CD8-positive, alpha-beta T cell (primary cell): ENCODE measurements at regions of chr1 and their contacts with region 1.

Region 1: DNA sequence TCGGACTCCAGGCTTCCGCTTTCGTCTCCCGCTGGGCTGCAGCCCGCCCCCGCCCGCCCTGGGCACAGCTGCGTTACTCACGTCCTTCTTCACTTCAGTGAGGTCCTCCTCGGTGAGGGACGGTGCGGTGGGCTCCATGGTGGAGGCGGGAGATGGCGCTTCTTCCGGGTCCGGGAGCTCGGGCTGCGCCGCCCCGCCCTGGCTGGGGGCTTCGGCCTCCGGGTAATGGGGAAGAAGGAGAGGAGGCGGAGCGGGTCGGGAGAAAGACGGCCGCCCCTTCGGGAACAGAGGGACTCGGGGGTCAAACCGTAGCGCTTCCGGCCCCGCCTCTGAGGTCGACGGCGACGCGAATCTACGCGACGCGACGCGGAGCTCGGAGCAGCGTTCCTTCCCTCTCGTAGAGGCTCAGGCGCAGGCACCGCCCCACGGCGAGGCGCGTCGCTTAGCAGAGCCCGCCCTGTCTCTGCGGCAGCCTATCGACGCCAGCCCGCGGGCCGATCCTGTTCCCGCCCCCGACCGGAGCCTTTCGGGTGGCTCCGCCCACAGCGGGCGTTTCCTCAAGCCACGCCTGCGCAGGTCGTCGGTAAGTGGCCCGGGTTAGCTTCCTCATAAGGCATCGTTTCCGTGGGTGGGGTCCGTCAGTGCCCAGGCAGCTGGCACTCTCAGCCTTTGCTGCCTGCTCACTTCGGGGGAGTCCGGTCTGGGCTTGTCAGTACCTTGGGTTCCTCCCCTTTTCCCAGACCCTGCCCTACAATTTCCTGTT is at the start of gene BCL10:
- DNase-seq: peak; percentile 95 to 99 (median 98)
- ATAC-seq: peak; percentile 94
- H3K4me3 ChIP-seq: peak within 1 kb of the TSS; percentile 72 to 80
- H3K4me3 Mint-ChIP-seq: peak within 1 kb of the TSS; percentile 86
- H3K27ac ChIP-seq: peak within 1 kb of the TSS; percentile 92 to 95
- H3K27ac Mint-ChIP-seq: peak within 1 kb of the TSS; percentile 94
- H3K4me1 ChIP-seq: peaks cover 35% of the 10 kb centered on the region
- H3K4me1 Mint-ChIP-seq: peaks cover 48% of the 10 kb centered on the region
- H3K27me3 ChIP-seq: no peaks in the 10 kb centered on the region
- H3K27me3 Mint-ChIP-seq: no peaks in the 10 kb centered on the region
- CTCF ChIP-seq: no peak
- total RNA-seq, gene BCL10: 48.2 to 51.7 TPM

Region 2: GRCh38 chr1:84298328-84298683 is 978.1 kb before region 1 on chr1:
- CTCF ChIA-PET with region 1: no interaction called
- POLR2A ChIA-PET with region 1: no interaction called
- intact Hi-C with region 1: loop called in 1 of 2 experiments (anchors 5 kb)
- DNase-seq: peak; percentile 12 to 75 (median 41)
- ATAC-seq: peak; percentile 70
- H3K4me3 ChIP-seq: peak overlapping the region; percentile 76 to 94
- H3K4me3 Mint-ChIP-seq: peak overlapping the region; percentile 78
- H3K27ac ChIP-seq: peak overlapping the region; percentile 8 to 53
- H3K27ac Mint-ChIP-seq: peak overlapping the region; percentile 46
- H3K4me1 ChIP-seq: peaks cover 17% of the 10 kb centered on the region
- H3K4me1 Mint-ChIP-seq: peaks cover 37% of the 10 kb centered on the region
- H3K27me3 ChIP-seq: no peaks in the 10 kb centered on the region
- H3K27me3 Mint-ChIP-seq: peaks cover 5% of the 10 kb centered on the region
- CTCF ChIP-seq: no peak

Region 3: GRCh38 chr1:84573967-84574842 is 702.2 kb before region 1 on chr1 and contains the start of gene CTBS:
- CTCF ChIA-PET with region 1: no interaction called
- POLR2A ChIA-PET with region 1: interaction called, 3 read pairs
- intact Hi-C with region 1: loop called (anchors 5 to 10 kb)
- DNase-seq: peak; percentile 67 to 93 (median 85)
- ATAC-seq: peak; percentile 91
- H3K4me3 ChIP-seq: peak within 1 kb of the TSS; percentile 81 to 92
- H3K4me3 Mint-ChIP-seq: peak within 1 kb of the TSS; percentile 96
- H3K27ac ChIP-seq: peak within 1 kb of the TSS; percentile 94 to 96
- H3K27ac Mint-ChIP-seq: peak within 1 kb of the TSS; percentile 99
- H3K4me1 ChIP-seq: peaks cover 20% of the 10 kb centered on the region
- H3K4me1 Mint-ChIP-seq: peaks cover 42% of the 10 kb centered on the region
- H3K27me3 ChIP-seq: no peaks in the 10 kb centered on the region
- H3K27me3 Mint-ChIP-seq: no peaks in the 10 kb centered on the region
- CTCF ChIP-seq: no peak
- total RNA-seq, gene CTBS: 17.3 to 19.7 TPM

Region 4: GRCh38 chr1:85061711-85062424 is 214.5 kb before region 1 on chr1:
- CTCF ChIA-PET with region 1: no interaction called
- POLR2A ChIA-PET with region 1: no interaction called
- intact Hi-C with region 1: loop called in 1 of 2 experiments (anchors 1 kb)
- DNase-seq: peak; percentile 64 to 96 (median 81)
- ATAC-seq: peak; percentile 99
- H3K4me3 ChIP-seq: peak overlapping the region; percentile 38 to 49
- H3K4me3 Mint-ChIP-seq: peak overlapping the region; percentile 84
- H3K27ac ChIP-seq: peak overlapping the region in 1 of 2 experiments; percentile 29
- H3K27ac Mint-ChIP-seq: peak overlapping the region; percentile 72
- H3K4me1 ChIP-seq: peaks cover 4% of the 10 kb centered on the region
- H3K4me1 Mint-ChIP-seq: peaks cover 14% of the 10 kb centered on the region
- H3K27me3 ChIP-seq: no peaks in the 10 kb centered on the region
- H3K27me3 Mint-ChIP-seq: peaks cover 12% of the 10 kb centered on the region
- CTCF ChIP-seq: no peak

Region 5: DNA sequence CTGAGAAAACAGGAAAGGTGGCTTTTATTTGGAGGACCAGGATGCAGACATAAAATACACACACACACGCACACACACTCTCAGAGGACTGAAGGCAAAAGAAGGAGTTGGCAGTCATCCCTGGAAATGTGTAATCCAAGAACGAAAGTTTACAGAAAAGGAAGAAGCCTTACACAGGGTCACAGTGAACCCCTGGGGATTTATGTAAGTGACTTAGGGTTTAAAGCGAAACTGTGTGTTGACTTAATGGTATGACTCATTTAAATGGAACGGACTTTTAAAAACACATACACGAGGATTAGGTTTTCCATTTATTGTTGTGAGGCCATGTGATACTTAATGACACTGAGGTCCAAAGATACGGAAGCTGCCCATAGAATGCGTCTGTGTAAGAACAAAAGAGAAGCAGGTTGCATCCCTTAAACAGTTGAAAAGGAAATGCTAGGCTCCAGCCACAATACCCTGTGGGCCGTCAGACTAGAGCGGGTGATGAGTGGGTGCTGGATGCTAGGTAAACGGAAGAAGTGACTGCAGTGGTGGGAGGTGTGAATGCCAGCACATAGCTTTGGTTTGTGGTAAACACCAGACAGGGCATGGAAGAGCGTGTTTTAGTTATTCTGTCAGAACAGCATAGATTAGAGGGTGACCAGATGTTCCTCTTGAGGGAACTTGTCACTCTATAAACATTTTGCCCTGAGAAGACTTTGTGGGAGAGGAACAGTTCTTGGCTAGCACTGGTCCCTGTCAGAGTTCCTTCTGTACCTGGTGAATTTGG is 21.6 kb after region 1 on chr1:
- CTCF ChIA-PET with region 1: no interaction called
- POLR2A ChIA-PET with region 1: interaction called, 7 read pairs
- intact Hi-C with region 1: loop called in 1 of 2 experiments (anchors 2 kb)
- DNase-seq: peak; percentile 18 to 89 (median 61)
- ATAC-seq: peak; percentile 92
- H3K4me3 ChIP-seq: no peak overlapping the region
- H3K4me3 Mint-ChIP-seq: peak overlapping the region; percentile 33
- H3K27ac ChIP-seq: no peak overlapping the region
- H3K27ac Mint-ChIP-seq: peak overlapping the region; percentile 6
- H3K4me1 ChIP-seq: peaks cover 8% of the 10 kb centered on the region
- H3K4me1 Mint-ChIP-seq: peaks cover 19% of the 10 kb centered on the region
- H3K27me3 ChIP-seq: peaks cover 0 to 2% of the 10 kb centered on the region in 2 experiments
- H3K27me3 Mint-ChIP-seq: peaks cover 3% of the 10 kb centered on the region
- CTCF ChIP-seq: no peak

Region 6: DNA sequence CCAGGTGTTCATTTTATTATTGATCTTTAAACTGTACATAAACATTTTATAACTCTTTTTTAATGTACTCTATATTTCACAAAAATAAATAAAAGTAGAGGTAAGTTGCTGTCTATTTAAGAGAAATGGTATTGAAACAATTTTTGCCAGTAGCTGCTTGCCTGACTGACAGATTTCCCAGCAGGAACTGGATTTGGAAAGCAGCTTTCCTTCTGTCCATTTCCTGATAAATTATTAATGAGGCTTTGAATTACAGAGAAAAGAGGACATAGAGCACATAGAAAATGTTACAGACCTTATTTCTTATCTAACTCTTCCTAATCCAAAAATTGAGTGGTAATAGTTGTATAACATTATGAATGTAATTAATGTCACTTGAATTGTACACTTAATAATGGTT is 79.7 kb after region 1 on chr1:
- CTCF ChIA-PET with region 1: no interaction called
- POLR2A ChIA-PET with region 1: no interaction called
- intact Hi-C with region 1: no loop called
- DNase-seq: no peak
- ATAC-seq: no peak
- H3K4me3 ChIP-seq: no peak overlapping the region
- H3K4me3 Mint-ChIP-seq: no peak overlapping the region
- H3K27ac ChIP-seq: no peak overlapping the region
- H3K27ac Mint-ChIP-seq: no peak overlapping the region
- H3K4me1 ChIP-seq: no peaks in the 10 kb centered on the region
- H3K4me1 Mint-ChIP-seq: no peaks in the 10 kb centered on the region
- H3K27me3 ChIP-seq: no peaks in the 10 kb centered on the region
- H3K27me3 Mint-ChIP-seq: no peaks in the 10 kb centered on the region
- CTCF ChIP-seq: no peak

Region 7: GRCh38 chr1:85494904-85495266 is 218.5 kb after region 1 on chr1:
- CTCF ChIA-PET with region 1: no interaction called
- POLR2A ChIA-PET with region 1: no interaction called
- intact Hi-C with region 1: no loop called
- DNase-seq: no peak
- ATAC-seq: no peak
- H3K4me3 ChIP-seq: no peak overlapping the region
- H3K4me3 Mint-ChIP-seq: no peak overlapping the region
- H3K27ac ChIP-seq: no peak overlapping the region
- H3K27ac Mint-ChIP-seq: no peak overlapping the region
- H3K4me1 ChIP-seq: no peaks in the 10 kb centered on the region
- H3K4me1 Mint-ChIP-seq: no peaks in the 10 kb centered on the region
- H3K27me3 ChIP-seq: no peaks in the 10 kb centered on the region
- H3K27me3 Mint-ChIP-seq: peaks cover 2% of the 10 kb centered on the region
- CTCF ChIP-seq: no peak

Region 8: DNA sequence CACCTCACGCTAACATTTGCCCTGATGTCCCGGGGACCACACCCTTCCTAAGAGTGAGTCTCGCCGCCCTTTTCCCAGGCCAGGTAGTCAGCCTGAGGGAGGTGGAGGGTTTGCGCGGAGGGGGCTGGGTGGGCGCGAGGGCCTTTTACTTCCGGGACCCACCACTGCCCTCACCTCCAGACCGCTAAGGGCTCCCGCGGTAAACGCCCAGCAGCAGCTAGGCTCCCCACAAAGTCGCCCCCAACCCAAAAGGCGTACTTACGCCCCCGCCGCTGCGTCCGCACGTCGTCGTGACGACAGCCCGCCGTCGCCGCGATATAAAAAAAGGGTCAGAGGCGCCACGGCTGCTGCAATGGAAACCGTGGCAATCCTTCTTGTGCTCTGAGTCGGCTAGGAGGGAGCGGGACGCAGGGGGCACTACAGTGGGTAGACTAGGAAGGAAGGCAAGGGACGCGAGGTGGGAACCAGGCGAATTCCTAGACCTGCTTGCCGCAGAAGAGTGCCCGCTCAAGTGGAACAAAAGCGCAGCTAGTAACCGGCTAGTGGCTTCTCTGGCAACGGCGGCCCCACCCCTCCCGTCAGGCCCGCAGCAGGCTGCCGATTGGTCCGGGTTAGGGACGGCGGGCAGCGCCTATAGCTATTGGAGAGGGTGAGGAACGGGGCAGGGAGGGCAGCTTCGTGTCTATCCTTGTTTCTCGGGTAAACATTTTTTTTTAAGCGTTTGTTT is 1119.5 kb after region 1 on chr1 and contains the start of gene ODF2L:
- CTCF ChIA-PET with region 1: no interaction called
- POLR2A ChIA-PET with region 1: no interaction called
- intact Hi-C with region 1: loop called (anchors 10 kb)
- DNase-seq: peak; percentile 74 to 91 (median 89)
- ATAC-seq: peak; percentile 98
- H3K4me3 ChIP-seq: peak within 1 kb of the TSS; percentile 91 to 97
- H3K4me3 Mint-ChIP-seq: peak within 1 kb of the TSS; percentile 99
- H3K27ac ChIP-seq: peak within 1 kb of the TSS; percentile 85 to 91
- H3K27ac Mint-ChIP-seq: peak within 1 kb of the TSS; percentile 97
- H3K4me1 ChIP-seq: peaks cover 16% of the 10 kb centered on the region
- H3K4me1 Mint-ChIP-seq: peaks cover 53% of the 10 kb centered on the region
- H3K27me3 ChIP-seq: no peaks in the 10 kb centered on the region
- H3K27me3 Mint-ChIP-seq: no peaks in the 10 kb centered on the region
- CTCF ChIP-seq: no peak
- total RNA-seq, gene ODF2L: 49.3 to 49.6 TPM